HCT116 (cell line): ENCODE measurements at regions of chr1 and their contacts with region 1.

Region 1: GRCh38 chr1:59083946-59084865 is 212.7 kb upstream of the FGGY start:
- DNase-seq: no peak
- ATAC-seq: no peak
- H3K4me3 ChIP-seq: no peak overlapping the region
- H3K27ac ChIP-seq: no peak overlapping the region
- H3K4me1 ChIP-seq: no peaks in the 10 kb centered on the region
- H3K27me3 ChIP-seq: no peaks in the 10 kb centered on the region
- CTCF ChIP-seq: no peak
- POLR2A ChIP-seq: no peak
- RAD21 ChIP-seq: no peak

Region 2: DNA sequence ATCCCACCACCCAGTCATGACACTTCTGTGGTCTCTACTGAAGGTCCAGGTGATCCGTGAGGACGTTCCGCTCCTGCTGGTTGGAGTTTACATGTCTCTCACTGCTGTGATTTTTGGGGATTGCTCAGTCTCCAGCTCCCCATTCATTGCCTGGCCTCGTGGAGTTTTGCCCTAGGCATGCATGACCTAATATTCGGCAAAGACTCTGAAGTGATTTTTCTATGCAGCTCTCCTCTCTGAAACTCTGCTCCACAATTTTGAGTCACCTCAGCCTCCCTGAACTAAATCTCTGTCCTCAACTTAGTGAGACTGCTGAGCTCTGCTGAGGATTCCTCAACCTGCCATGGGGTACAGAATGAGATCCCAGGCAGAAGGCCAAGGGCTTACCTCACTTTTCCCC is 38.3 kb after region 1 on chr1:
- CTCF ChIA-PET with region 1: no interaction called
- POLR2A ChIA-PET with region 1: no interaction called
- RAD21 ChIA-PET with region 1: no interaction called
- intact Hi-C with region 1: loop called (anchors 1 kb)
- DNase-seq: no peak
- ATAC-seq: no peak
- H3K4me3 ChIP-seq: no peak overlapping the region
- H3K27ac ChIP-seq: no peak overlapping the region
- H3K4me1 ChIP-seq: no peaks in the 10 kb centered on the region
- H3K27me3 ChIP-seq: no peaks in the 10 kb centered on the region
- CTCF ChIP-seq: no peak
- POLR2A ChIP-seq: no peak
- RAD21 ChIP-seq: no peak